PC-9 (cell line): ENCODE measurements at regions of chr18 and their contacts with region 1.

Region 1: GRCh38 chr18:21600526-21601410 is at the start of gene ESCO1:
- DNase-seq: peak; percentile 88 to 92
- H3K4me3 ChIP-seq: peak within 1 kb of the TSS; percentile 85
- H3K27ac ChIP-seq: peak within 1 kb of the TSS; percentile 94
- H3K4me1 ChIP-seq: peaks cover 8% of the 10 kb centered on the region
- H3K27me3 ChIP-seq: no peaks in the 10 kb centered on the region
- CTCF ChIP-seq: peak; percentile 75
- total RNA-seq, gene ESCO1: 10.8 and 11.3 TPM in 2 replicates

Region 2: DNA sequence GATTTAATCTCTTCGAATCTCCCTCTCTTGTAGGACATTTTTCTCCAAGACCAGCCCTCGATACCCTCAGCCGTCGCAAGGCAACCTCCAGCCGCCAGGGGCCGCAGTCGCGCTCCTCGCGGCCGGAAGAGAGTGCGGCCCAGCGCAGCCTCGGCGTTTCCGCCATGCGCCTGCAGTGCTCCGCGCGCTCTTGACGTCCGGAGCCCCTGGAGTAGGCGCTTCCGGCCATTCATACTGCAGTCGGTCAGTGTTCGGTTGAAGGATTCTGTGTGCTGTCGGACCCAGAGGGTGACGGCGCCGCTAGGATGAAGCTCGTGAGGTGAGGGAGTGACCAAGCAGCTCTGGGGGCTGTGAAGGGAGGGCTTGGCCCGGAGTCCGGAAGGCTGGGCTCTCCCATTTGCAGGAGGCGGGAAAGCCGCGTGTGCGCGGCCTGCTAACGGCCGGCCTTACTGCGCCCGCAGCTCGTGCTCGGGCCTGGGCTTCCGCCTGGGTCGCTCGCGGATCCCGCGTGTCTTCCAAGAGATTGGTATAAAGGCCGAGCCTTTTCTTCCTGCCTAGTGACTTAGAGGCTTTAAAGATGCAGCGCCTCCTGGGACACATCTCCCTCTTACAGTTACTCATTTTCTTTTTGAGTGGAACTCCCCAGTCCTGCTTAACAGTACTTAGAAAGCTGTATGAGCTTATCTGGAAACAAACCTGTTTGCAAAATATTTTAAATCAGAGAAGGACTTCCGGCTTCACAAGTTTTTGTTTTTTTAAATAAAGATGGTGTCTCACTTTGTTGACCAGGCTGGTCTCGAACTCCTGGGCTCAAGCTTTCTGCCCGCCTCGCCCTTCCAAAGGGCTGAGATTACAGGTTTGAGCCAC is 11.6 kb after region 1 on chr18 and contains the start of gene SNRPD1:
- CTCF ChIA-PET with region 1: interaction called, 10 read pairs
- POLR2A ChIA-PET with region 1: no interaction called
- intact Hi-C with region 1: no loop called
- DNase-seq: peak; percentile 69 to 87
- H3K4me3 ChIP-seq: peak within 1 kb of the TSS; percentile 83
- H3K27ac ChIP-seq: peak within 1 kb of the TSS; percentile 75
- H3K4me1 ChIP-seq: peaks cover 12% of the 10 kb centered on the region; the same call in 1 of the 2 replicates
- H3K27me3 ChIP-seq: no peaks in the 10 kb centered on the region
- CTCF ChIP-seq: peak; percentile 80
- total RNA-seq, gene SNRPD1: 56.0 and 57.6 TPM in 2 replicates

Region 3: GRCh38 chr18:21704603-21705364 is 104.0 kb after region 1 on chr18 and contains the start of gene ABHD3:
- CTCF ChIA-PET with region 1: interaction called, 11 read pairs
- POLR2A ChIA-PET with region 1: no interaction called
- intact Hi-C with region 1: no loop called
- DNase-seq: peak; percentile 74 to 86
- H3K4me3 ChIP-seq: peak within 1 kb of the TSS; percentile 94
- H3K27ac ChIP-seq: peak within 1 kb of the TSS; percentile 63
- H3K4me1 ChIP-seq: peaks cover 17% of the 10 kb centered on the region
- H3K27me3 ChIP-seq: no peaks in the 10 kb centered on the region
- CTCF ChIP-seq: peak; percentile 31; the same call in 1 of the 2 replicates
- total RNA-seq, gene ABHD3: 23.4 and 33.7 TPM in 2 replicates

Region 4: GRCh38 chr18:21996351-21996826 is 395.6 kb after region 1 on chr18:
- CTCF ChIA-PET with region 1: no interaction called
- POLR2A ChIA-PET with region 1: no interaction called
- intact Hi-C with region 1: no loop called
- DNase-seq: no peak
- H3K4me3 ChIP-seq: no peak overlapping the region
- H3K27ac ChIP-seq: no peak overlapping the region
- H3K4me1 ChIP-seq: no peaks in the 10 kb centered on the region
- H3K27me3 ChIP-seq: no peaks in the 10 kb centered on the region
- CTCF ChIP-seq: no peak